Calu3 (cell line): ENCODE measurements at regions of chr17 and their contacts with region 1.

Region 1: DNA sequence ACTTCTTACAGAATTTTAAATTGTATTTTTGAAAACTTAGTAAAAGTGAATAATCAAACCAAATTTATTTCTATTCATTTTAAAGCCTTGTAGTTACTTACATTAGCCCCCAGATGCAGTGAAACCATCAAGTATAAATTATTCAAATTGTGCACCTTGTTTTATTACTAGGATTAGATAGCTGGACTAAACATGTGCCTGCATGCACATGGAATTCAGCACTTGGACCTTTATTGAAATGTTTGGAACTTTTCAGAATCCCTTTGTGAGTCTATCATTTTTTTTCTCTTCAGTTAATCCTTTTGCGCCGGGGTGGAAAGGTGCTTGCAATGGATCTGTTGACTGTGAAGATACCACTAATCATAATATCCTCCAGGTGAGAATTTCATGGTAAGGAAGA is 4.7 kb downstream of the ZPBP2 start:
- DNase-seq: peak; percentile 78
- H3K4me3 Mint-ChIP-seq: no peak overlapping the region
- H3K27ac Mint-ChIP-seq: no peak overlapping the region
- H3K4me1 Mint-ChIP-seq: no peaks in the 10 kb centered on the region
- H3K27me3 Mint-ChIP-seq: peaks cover 11% of the 10 kb centered on the region
- CTCF ChIP-seq: no peak

Region 2: GRCh38 chr17:39653662-39654331 is 219.0 kb before region 1 on chr17:
- CTCF ChIA-PET with region 1: interaction called, 67 read pairs
- intact Hi-C with region 1: no loop called
- DNase-seq: peak; percentile 100
- H3K4me3 Mint-ChIP-seq: no peak overlapping the region
- H3K27ac Mint-ChIP-seq: no peak overlapping the region
- H3K4me1 Mint-ChIP-seq: peaks cover 23% of the 10 kb centered on the region
- H3K27me3 Mint-ChIP-seq: no peaks in the 10 kb centered on the region
- CTCF ChIP-seq: no peak

Region 3: GRCh38 chr17:39722965-39723848 is 149.5 kb before region 1 on chr17:
- CTCF ChIA-PET with region 1: interaction called, 18 read pairs
- intact Hi-C with region 1: no loop called
- DNase-seq: peak; percentile 75
- H3K4me3 Mint-ChIP-seq: peak overlapping the region; percentile 0
- H3K27ac Mint-ChIP-seq: peak overlapping the region; percentile 28
- H3K4me1 Mint-ChIP-seq: peaks cover 38% of the 10 kb centered on the region
- H3K27me3 Mint-ChIP-seq: no peaks in the 10 kb centered on the region
- CTCF ChIP-seq: no peak

Region 4: GRCh38 chr17:39769974-39770587 is 102.7 kb before region 1 on chr17:
- CTCF ChIA-PET with region 1: interaction called, 48 read pairs
- intact Hi-C with region 1: no loop called
- DNase-seq: peak; percentile 100
- H3K4me3 Mint-ChIP-seq: peak overlapping the region; percentile 10
- H3K27ac Mint-ChIP-seq: peak overlapping the region; percentile 60
- H3K4me1 Mint-ChIP-seq: peaks cover 72% of the 10 kb centered on the region
- H3K27me3 Mint-ChIP-seq: peaks cover 13% of the 10 kb centered on the region
- CTCF ChIP-seq: no peak

Region 5: GRCh38 chr17:39822051-39822451 is 50.7 kb before region 1 on chr17:
- CTCF ChIA-PET with region 1: interaction called, 182 read pairs
- intact Hi-C with region 1: no loop called
- DNase-seq: peak; percentile 59
- H3K4me3 Mint-ChIP-seq: no peak overlapping the region
- H3K27ac Mint-ChIP-seq: no peak overlapping the region
- H3K4me1 Mint-ChIP-seq: peaks cover 9% of the 10 kb centered on the region
- H3K27me3 Mint-ChIP-seq: no peaks in the 10 kb centered on the region
- CTCF ChIP-seq: no peak

Region 6: DNA sequence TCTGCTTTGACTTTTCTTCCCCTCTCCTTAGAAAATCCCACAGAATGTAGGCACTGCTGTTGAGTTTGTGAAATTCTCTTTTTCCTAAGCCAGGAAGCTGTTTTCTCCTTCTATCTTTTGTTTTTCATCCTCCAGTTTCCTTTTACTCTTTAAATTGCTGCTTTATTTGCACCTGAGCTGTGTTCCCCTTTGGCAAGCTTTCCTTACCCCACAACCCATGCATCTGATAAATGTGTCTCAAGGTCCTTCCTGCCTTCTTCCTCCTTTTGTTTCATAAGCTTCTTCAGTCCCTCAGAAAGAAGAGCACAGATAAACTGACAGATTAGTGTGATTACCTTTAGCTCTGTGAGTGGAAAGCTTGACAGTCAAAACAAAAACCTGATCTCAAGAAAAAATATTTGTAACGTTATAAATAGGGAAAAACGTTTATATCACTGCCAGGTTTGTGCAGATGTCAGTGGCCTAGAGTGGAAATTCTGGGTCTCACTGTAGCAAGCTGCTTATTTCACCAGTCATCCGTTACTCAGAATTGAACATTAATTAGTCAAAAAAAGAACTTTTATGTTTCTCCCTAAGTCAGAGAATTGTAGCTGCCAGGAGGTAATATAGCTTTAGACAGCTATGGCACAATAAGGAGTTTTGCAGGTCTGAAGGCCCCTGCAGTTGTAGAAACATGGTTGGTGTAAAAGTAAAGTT is 22.1 kb after region 1 on chr17:
- CTCF ChIA-PET with region 1: interaction called, 1,000 read pairs
- intact Hi-C with region 1: no loop called
- DNase-seq: peak; percentile 63
- H3K4me3 Mint-ChIP-seq: no peak overlapping the region
- H3K27ac Mint-ChIP-seq: no peak overlapping the region
- H3K4me1 Mint-ChIP-seq: peaks cover 23% of the 10 kb centered on the region
- H3K27me3 Mint-ChIP-seq: peaks cover 15% of the 10 kb centered on the region
- CTCF ChIP-seq: no peak

Region 7: DNA sequence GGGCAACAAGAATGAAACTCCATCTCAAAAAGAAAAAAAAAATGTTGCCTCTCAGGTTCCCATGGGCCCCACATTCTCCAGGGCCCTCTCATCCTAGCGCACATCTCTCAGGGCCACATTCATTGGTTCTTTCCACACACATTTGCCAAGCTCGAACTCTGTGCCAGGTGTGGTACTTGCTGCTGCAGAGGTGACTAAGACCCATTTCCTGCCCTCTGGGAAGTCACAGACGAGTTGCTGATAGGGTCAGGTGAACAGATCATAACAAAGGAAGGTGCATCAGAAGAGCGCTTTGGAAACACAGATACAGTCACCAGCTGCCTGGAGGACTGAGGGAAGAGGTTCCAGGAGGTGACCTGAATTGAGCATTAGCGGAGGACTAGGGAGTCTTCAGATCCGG is 91.1 kb after region 1 on chr17:
- CTCF ChIA-PET with region 1: interaction called, 184 read pairs
- intact Hi-C with region 1: no loop called
- DNase-seq: peak; percentile 94
- H3K4me3 Mint-ChIP-seq: no peak overlapping the region
- H3K27ac Mint-ChIP-seq: peak overlapping the region; percentile 0
- H3K4me1 Mint-ChIP-seq: peaks cover 45% of the 10 kb centered on the region
- H3K27me3 Mint-ChIP-seq: peaks cover 32% of the 10 kb centered on the region
- CTCF ChIP-seq: no peak